ENCODE measurements at regions of chr3 and their contacts with region 1.

Region 1: DNA sequence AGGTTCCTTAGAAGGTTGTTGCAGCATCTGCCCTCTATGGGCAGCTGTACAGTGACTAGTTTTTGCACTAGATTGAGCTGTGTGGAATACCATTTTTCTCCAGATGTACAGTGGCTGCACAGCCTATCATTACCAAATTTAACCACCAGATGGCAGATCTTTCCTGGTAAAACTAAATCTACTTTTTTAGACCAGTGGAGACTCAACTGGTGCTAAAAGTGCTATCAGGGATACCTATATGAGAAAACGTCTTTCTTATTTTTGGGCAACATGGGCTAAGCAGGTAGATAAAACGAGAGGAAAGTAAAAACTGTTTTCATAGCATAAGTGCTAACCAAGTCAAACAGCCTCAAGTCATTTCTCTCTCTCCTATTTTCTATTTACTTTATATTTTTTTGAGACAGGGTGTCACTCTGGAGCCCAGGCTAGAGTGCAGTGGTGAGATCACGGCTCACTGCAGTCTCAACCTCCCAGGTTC is 21.2 kb downstream of the IGSF10 start:
- DNase-seq: peak; percentile 61
- ATAC-seq: peak; percentile 80
- H3K4me3 ChIP-seq: no peak overlapping the region
- H3K4me3 Mint-ChIP-seq: no peak overlapping the region
- H3K27ac ChIP-seq: no peak overlapping the region
- H3K27ac Mint-ChIP-seq: no peak overlapping the region
- H3K4me1 ChIP-seq: no peaks in the 10 kb centered on the region
- H3K4me1 Mint-ChIP-seq: peaks cover 2% of the 10 kb centered on the region
- H3K27me3 ChIP-seq: no peaks in the 10 kb centered on the region
- H3K27me3 Mint-ChIP-seq: no peaks in the 10 kb centered on the region
- CTCF ChIP-seq: peak; percentile 87

Region 2: DNA sequence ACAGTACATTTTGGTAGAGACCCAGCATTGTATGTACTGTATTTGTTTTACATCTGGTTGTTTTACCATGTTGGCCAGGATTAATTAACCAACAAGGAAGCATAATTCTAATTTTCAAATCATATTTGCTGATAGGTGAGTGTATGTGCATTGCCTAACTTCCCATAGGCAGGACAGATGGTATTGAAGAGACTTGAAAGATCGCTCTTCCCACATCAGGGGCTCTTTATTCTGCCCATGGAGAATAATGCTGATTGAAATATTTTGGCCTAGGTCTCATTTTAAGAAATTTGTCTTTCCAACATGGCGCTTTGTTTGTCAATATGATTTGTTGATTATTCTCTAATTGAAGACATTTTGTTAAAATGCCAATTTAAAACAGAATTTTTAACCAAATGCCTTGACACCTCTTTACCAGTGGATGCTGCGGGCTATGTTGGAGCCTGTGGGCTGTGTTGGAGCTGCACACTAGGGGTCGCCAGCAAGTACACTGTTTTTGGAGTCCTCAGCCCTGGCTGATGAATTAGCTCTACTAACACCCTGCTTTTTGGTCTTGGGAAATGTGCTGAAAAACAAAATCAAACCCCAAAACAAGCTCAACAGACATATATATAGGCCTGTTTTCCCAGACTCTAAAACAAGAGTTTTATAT is 60.5 kb before region 1 on chr3:
- CTCF ChIA-PET with region 1: interaction called, 5 read pairs
- POLR2A ChIA-PET with region 1: no interaction called
- intact Hi-C with region 1: loop called (anchors 2 kb)
- DNase-seq: peak; percentile 52
- ATAC-seq: peak; percentile 68
- H3K4me3 ChIP-seq: no peak overlapping the region
- H3K4me3 Mint-ChIP-seq: no peak overlapping the region
- H3K27ac ChIP-seq: no peak overlapping the region
- H3K27ac Mint-ChIP-seq: peak overlapping the region; percentile 48
- H3K4me1 ChIP-seq: peaks cover 27% of the 10 kb centered on the region in 2 donors
- H3K4me1 Mint-ChIP-seq: peaks cover 48% of the 10 kb centered on the region
- H3K27me3 ChIP-seq: no peaks in the 10 kb centered on the region
- H3K27me3 Mint-ChIP-seq: no peaks in the 10 kb centered on the region
- CTCF ChIP-seq: peak; percentile 72

Region 3: GRCh38 chr3:151425627-151426335 is 13.9 kb before region 1 on chr3:
- CTCF ChIA-PET with region 1: interaction called, 47 read pairs
- POLR2A ChIA-PET with region 1: interaction called, 4 read pairs
- intact Hi-C with region 1: no loop called
- DNase-seq: peak; percentile 20
- ATAC-seq: no peak
- H3K4me3 ChIP-seq: no peak overlapping the region
- H3K4me3 Mint-ChIP-seq: no peak overlapping the region
- H3K27ac ChIP-seq: no peak overlapping the region
- H3K27ac Mint-ChIP-seq: peak overlapping the region; percentile 50
- H3K4me1 ChIP-seq: peaks cover 5 to 11% of the 10 kb centered on the region in 2 donors
- H3K4me1 Mint-ChIP-seq: peaks cover 22% of the 10 kb centered on the region
- H3K27me3 ChIP-seq: no peaks in the 10 kb centered on the region
- H3K27me3 Mint-ChIP-seq: no peaks in the 10 kb centered on the region
- CTCF ChIP-seq: no peak

Region 4: GRCh38 chr3:151593928-151594327 is 154.2 kb after region 1 on chr3:
- CTCF ChIA-PET with region 1: no interaction called
- POLR2A ChIA-PET with region 1: no interaction called
- intact Hi-C with region 1: no loop called
- DNase-seq: no peak
- ATAC-seq: no peak
- H3K4me3 ChIP-seq: no peak overlapping the region
- H3K4me3 Mint-ChIP-seq: no peak overlapping the region
- H3K27ac ChIP-seq: no peak overlapping the region
- H3K27ac Mint-ChIP-seq: no peak overlapping the region
- H3K4me1 ChIP-seq: no peaks in the 10 kb centered on the region
- H3K4me1 Mint-ChIP-seq: no peaks in the 10 kb centered on the region
- H3K27me3 ChIP-seq: no peaks in the 10 kb centered on the region
- H3K27me3 Mint-ChIP-seq: peaks cover 4% of the 10 kb centered on the region
- CTCF ChIP-seq: no peak

Region 5: DNA sequence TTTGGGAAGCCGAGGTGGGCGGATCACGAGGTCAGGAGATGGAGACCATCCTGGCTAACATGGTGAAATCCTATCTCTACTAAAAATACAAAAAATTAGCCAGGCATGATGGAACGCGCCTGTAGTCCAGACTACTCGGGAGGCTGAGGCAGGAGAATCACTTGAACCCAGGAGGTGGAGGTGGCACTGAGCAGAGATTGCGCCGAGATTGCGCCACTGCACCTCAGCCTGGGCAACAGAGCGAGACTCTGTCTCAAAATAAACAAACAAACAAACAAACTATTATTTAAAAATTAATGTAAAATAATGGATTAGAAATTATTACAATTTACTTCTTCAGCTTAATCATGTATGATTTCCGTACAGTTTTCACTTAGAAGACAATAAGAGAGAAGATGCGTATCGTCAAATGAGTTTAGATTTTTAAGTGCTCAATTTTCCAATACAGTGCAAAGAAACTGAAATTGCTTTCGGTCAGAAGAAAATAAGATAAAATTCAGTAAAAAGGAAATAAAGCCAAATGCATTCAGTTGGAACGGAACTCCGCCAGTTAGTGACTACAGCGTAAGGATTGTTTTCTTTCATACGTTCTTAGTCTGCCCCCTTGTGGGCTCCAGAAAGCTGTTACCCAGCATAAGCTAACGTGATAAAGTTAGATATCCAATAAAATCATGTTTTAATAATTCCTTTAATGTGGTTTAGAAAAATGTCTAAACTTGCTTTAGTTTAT is 399.1 kb after region 1 on chr3:
- CTCF ChIA-PET with region 1: interaction called, 41 read pairs
- POLR2A ChIA-PET with region 1: no interaction called
- intact Hi-C with region 1: loop called (anchors 1 kb)
- DNase-seq: peak; percentile 69
- ATAC-seq: peak; percentile 65
- H3K4me3 ChIP-seq: no peak overlapping the region
- H3K4me3 Mint-ChIP-seq: no peak overlapping the region
- H3K27ac ChIP-seq: no peak overlapping the region
- H3K27ac Mint-ChIP-seq: no peak overlapping the region
- H3K4me1 ChIP-seq: no peaks in the 10 kb centered on the region
- H3K4me1 Mint-ChIP-seq: peaks cover 3% of the 10 kb centered on the region
- H3K27me3 ChIP-seq: no peaks in the 10 kb centered on the region
- H3K27me3 Mint-ChIP-seq: peaks cover 5% of the 10 kb centered on the region
- CTCF ChIP-seq: peak; percentile 83

Region 6: DNA sequence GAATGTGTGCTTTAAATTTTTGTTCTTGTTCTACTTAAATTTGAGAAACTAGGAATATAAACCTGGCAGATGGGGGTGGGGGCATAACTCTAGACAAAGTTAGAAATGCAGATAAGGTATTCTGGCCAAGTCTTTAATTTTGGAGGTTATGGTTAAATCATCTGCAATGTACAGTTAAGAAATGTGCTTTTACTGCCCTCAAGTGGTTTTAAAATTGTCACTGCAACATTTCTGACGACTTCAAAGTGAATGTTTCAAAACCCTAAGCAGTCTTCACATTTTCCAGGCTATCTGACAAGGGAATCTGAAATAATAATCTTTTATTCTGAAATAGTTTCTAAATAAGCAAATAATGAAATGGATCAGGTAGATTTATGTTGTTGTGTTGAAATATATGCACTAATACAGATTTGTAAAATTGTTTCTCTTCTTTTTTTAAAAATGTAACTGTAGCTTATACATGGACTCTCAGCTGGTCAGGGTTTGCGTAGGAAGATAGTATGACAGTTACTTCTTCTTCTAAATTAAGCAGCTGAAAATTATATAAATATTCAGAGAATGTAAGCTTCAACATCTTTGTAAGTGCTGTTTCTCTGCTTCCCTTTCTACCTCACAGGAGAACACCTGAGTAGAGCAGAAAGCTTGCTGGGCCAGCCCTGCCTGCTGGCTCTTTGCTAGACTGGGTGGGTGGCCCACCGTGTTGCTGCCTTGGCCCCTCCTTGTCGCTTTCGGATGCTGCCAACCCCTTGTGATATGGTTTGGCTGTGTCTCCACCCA is 478.8 kb after region 1 on chr3:
- CTCF ChIA-PET with region 1: interaction called, 7 read pairs
- POLR2A ChIA-PET with region 1: no interaction called
- intact Hi-C with region 1: loop called (anchors 1 kb)
- DNase-seq: peak; percentile 40
- ATAC-seq: no peak
- H3K4me3 ChIP-seq: no peak overlapping the region
- H3K4me3 Mint-ChIP-seq: no peak overlapping the region
- H3K27ac ChIP-seq: no peak overlapping the region
- H3K27ac Mint-ChIP-seq: no peak overlapping the region
- H3K4me1 ChIP-seq: no peaks in the 10 kb centered on the region
- H3K4me1 Mint-ChIP-seq: no peaks in the 10 kb centered on the region
- H3K27me3 ChIP-seq: no peaks in the 10 kb centered on the region
- H3K27me3 Mint-ChIP-seq: no peaks in the 10 kb centered on the region
- CTCF ChIP-seq: peak; percentile 65

Region 7: DNA sequence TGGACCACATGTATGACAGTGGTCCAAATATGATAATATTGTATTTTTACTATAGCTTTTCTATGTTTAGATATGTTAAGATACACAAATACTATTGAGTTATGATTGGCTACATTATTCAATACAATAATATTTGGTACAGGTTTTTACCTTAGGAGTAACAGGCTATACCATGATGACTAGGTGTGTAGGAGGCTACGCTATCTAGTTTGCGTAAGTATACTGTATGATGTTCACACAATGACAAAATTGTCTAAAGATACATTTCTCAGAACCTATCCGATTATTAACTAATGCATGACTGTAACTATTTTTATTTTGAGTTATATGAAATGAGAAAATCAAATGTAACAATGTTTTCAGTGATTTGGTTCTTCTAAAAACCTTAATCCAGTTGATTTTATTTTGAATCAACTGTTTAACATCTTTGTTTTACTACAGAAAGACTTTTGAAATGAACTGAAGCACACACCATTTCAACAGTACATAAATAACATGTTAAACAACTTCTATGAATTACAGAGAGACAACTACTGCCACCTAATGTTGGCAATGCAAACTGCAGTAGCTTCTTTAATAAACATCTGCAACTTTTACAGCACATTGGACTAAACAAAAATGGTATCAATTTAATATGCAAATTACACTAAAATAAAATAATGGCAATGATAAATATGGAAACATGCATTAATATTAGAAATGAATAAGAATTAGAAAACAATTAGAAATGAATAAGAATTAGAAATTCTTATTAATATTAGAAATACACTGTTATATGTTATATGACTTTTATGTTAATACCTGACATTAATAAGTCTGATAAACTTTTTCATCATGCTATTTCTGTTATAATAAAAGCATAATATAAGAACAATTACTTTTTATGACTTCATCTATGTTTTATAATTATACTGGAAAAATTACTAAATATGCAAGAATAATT is 1084.8 kb after region 1 on chr3:
- CTCF ChIA-PET with region 1: interaction called, 9 read pairs
- POLR2A ChIA-PET with region 1: no interaction called
- intact Hi-C with region 1: loop called (anchors 2 kb)
- DNase-seq: peak; percentile 76
- ATAC-seq: peak; percentile 68
- H3K4me3 ChIP-seq: no peak overlapping the region
- H3K4me3 Mint-ChIP-seq: no peak overlapping the region
- H3K27ac ChIP-seq: no peak overlapping the region
- H3K27ac Mint-ChIP-seq: no peak overlapping the region
- H3K4me1 ChIP-seq: peaks cover 5 to 6% of the 10 kb centered on the region in 2 donors
- H3K4me1 Mint-ChIP-seq: peaks cover 22% of the 10 kb centered on the region
- H3K27me3 ChIP-seq: no peaks in the 10 kb centered on the region
- H3K27me3 Mint-ChIP-seq: no peaks in the 10 kb centered on the region
- CTCF ChIP-seq: peak; percentile 98

Region 8: DNA sequence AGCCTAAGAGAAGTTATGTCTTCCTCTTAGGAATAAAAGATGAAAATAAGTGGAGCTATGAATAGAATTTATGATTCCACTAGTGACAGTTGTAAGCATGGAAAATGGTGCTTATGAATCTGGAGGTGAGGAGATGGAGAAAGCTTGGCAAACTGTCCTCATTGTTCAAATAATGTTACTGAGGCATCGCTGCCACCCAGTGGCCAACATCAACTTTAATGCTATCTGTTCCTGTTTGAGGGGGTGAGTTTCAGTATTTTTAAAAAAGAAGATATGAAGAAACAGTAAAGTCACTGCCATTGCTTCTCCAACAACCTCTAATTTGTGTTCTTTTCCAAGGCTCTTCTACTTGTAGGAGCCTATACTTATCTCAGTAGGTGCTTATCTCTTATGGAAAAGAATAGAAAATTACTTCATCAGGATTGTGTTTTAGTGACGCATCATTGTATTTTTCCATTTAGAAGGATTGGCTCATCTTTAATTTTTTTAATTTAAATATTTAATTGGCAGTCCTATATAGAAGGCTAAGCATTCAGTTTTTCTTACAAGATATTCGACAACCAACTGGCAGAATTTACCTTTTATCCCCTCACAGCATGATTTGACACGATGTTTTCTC is 1134.9 kb after region 1 on chr3:
- CTCF ChIA-PET with region 1: interaction called, 7 read pairs
- POLR2A ChIA-PET with region 1: no interaction called
- intact Hi-C with region 1: loop called (anchors 1 kb)
- DNase-seq: peak; percentile 65
- ATAC-seq: peak; percentile 61
- H3K4me3 ChIP-seq: no peak overlapping the region
- H3K4me3 Mint-ChIP-seq: no peak overlapping the region
- H3K27ac ChIP-seq: no peak overlapping the region
- H3K27ac Mint-ChIP-seq: no peak overlapping the region
- H3K4me1 ChIP-seq: no peaks in the 10 kb centered on the region
- H3K4me1 Mint-ChIP-seq: peaks cover 2% of the 10 kb centered on the region
- H3K27me3 ChIP-seq: no peaks in the 10 kb centered on the region
- H3K27me3 Mint-ChIP-seq: no peaks in the 10 kb centered on the region
- CTCF ChIP-seq: peak; percentile 74